Activated CD4-positive, alpha-beta memory T cell treated with anti-CD3 and anti-CD28 coated beads for 36 hours (primary cell): ENCODE measurements at regions of chr2 and their contacts with region 1.

Region 1: DNA sequence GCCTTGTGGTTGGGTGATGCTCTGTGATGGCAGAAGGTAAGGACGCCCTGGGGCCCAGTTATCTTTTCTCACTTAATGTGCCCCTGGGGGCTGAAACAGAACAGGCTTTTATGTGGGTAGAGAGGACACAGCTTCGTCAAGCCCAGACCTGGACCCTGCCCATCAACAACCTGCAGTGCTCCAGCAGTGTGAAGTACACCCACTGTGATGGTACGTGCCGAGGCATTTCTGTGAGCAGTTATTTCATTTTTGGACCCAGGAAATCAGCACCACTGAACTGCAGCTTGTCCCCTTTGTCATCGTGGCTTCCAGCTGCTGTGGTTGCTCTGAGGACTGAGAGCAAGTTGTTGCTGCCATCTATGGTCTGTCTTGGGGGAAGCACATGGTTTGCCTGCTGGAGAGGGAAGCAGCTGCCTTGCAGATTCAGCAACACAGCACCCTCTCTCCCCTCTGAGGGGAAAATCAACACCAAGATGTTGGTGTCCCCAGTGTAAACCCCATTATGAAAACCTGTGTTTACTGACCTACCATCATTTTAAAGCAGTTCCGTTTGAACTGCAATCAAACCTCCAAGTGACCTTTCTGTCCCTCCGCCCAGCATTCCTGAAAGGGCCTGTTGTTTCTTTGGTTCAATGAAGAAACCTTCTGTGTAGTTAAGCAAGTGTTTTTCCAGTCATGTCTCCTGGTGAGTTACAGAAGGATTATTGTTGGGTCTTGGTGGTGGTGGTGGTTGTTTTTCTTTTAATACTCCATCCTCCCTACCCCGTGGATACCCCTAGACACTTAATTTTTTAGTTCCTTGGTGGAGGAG is 158.2 kb downstream of the MGAT5 start:
- DNase-seq: peak; percentile 78
- H3K4me3 Mint-ChIP-seq: no peak overlapping the region
- H3K27ac Mint-ChIP-seq: no peak overlapping the region
- H3K4me1 Mint-ChIP-seq: peaks cover 35% of the 10 kb centered on the region
- H3K27me3 Mint-ChIP-seq: no peaks in the 10 kb centered on the region

Region 2: GRCh38 chr2:134027980-134028379 is 384.1 kb before region 1 on chr2:
- CTCF ChIA-PET with region 1: no interaction called
- POLR2A ChIA-PET with region 1: no interaction called
- intact Hi-C with region 1: no loop called
- DNase-seq: no peak
- H3K4me3 Mint-ChIP-seq: no peak overlapping the region
- H3K27ac Mint-ChIP-seq: no peak overlapping the region
- H3K4me1 Mint-ChIP-seq: no peaks in the 10 kb centered on the region
- H3K27me3 Mint-ChIP-seq: peaks cover 26% of the 10 kb centered on the region

Region 3: GRCh38 chr2:134198006-134198634 is 213.9 kb before region 1 on chr2:
- CTCF ChIA-PET with region 1: interaction called, 10 read pairs
- POLR2A ChIA-PET with region 1: no interaction called
- intact Hi-C with region 1: no loop called
- DNase-seq: no peak
- H3K4me3 Mint-ChIP-seq: peak overlapping the region; percentile 36
- H3K27ac Mint-ChIP-seq: peak overlapping the region; percentile 79
- H3K4me1 Mint-ChIP-seq: peaks cover 84% of the 10 kb centered on the region
- H3K27me3 Mint-ChIP-seq: no peaks in the 10 kb centered on the region

Region 4: DNA sequence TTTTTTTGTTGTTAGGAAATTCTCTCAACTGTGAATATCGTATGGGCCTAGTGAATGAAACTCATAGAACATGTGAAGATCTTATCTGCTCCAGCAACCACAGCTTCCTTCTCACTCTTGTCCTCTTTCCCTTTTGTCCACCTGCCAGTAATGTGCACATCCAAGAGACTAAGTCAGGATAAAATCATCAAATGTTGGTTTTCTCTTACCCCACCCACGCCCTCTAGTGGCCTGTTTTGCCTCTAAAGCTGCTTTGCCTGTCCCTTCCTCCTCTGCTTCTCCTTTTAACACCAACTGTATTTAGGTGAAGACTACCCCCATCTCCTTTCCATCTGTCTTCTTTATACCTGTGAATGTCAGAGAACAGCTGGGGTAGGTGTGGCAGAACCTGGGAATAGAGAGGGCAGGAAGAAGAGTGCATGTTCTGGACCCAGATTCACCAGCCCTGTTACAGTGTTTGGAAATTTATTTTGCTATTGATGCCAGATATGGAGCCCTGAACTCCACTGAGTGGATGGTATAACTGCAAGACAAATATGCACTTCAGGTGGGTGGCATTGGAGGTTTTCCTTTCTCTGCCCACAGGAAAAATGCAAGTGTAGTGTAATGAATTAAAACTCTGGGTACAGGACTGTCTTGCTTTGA is 166.6 kb before region 1 on chr2:
- CTCF ChIA-PET with region 1: interaction called, 23 read pairs
- POLR2A ChIA-PET with region 1: no interaction called
- intact Hi-C with region 1: loop called (anchors 1 kb)
- DNase-seq: peak; percentile 82
- H3K4me3 Mint-ChIP-seq: no peak overlapping the region
- H3K27ac Mint-ChIP-seq: no peak overlapping the region
- H3K4me1 Mint-ChIP-seq: peaks cover 82% of the 10 kb centered on the region
- H3K27me3 Mint-ChIP-seq: peaks cover 2% of the 10 kb centered on the region

Region 5: DNA sequence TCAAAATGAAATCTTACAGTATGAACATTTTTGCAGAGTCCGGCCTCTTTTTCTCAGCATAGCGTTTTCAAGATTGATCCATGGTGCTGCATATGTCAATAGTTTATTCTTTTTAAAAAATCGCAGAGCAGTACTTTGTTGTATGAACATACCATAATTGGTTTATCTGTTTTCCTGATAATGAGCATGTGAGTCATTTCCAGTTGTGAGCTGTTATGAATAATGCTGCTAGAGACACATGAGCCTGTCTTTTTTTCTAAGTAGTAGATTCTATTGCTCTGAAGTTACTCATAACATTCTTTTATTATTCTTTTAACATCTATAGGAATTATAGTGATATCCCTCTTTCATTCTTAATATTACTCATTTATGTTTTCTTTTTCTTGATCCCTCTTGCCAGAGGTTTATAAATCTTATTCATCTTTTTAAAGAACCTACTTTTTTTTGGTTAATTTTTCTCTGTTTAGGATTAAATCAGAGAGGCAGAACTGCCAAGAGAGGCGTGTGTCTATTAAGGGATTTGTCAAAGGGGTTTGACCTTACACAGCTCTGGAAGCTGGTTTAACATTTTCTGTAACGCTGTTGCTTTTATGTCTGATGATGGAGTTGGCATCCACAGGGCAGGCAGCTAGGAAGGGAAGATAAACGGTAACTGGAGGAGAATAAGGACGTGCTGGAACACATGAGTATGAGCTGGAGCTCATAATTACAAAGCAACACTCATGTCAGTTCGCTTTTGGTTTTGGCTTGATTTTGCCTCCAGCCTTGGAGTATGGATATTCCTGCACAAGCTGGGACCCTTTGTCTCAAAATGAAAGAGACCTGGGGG is 110.7 kb before region 1 on chr2:
- CTCF ChIA-PET with region 1: no interaction called
- POLR2A ChIA-PET with region 1: no interaction called
- intact Hi-C with region 1: loop called (anchors 5 kb)
- DNase-seq: no peak
- H3K4me3 Mint-ChIP-seq: no peak overlapping the region
- H3K27ac Mint-ChIP-seq: no peak overlapping the region
- H3K4me1 Mint-ChIP-seq: peaks cover 49% of the 10 kb centered on the region
- H3K27me3 Mint-ChIP-seq: no peaks in the 10 kb centered on the region

Region 6: DNA sequence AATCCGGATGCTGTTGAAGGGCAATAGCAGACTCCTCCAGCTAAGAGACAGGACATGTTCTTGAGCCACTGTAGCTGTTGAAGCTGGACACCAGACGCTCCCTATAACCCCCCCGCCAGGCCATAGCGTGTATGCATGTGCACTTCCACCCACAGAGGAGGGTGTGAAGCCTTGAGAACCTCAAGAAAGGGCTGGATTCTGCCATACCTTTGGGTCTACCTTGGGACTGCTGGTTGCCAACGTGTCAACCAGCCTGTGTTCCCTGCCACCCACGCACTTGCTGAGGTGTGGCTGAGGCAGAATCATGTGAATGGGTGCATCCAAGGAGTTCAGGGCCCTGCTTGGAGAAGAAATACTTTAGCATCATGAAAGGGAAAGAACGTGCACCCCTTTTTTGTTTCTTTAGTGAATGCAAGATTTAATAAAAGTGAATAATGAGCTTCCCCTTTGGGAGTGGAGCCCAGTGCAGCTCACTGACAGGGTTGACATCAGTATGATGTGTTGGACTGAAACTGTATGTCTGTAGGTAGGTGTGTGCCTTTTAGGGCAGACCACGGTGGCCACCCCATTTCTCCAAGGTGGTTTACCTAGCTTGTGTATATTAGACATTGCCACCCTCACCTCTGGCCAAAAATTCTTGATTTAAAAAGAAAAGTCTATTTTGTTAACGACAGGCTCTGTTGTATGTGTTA is 40.2 kb after region 1 on chr2:
- CTCF ChIA-PET with region 1: interaction called, 17 read pairs
- POLR2A ChIA-PET with region 1: no interaction called
- intact Hi-C with region 1: no loop called
- DNase-seq: no peak
- H3K4me3 Mint-ChIP-seq: no peak overlapping the region
- H3K27ac Mint-ChIP-seq: no peak overlapping the region
- H3K4me1 Mint-ChIP-seq: no peaks in the 10 kb centered on the region
- H3K27me3 Mint-ChIP-seq: no peaks in the 10 kb centered on the region